T-cell (primary cell): ENCODE measurements at regions of chr20 and their contacts with region 1.

Region 1: GRCh38 chr20:17538517-17539170 is 7.5 kb upstream of the BFSP1 start:
- DNase-seq: peak in 1 of 35 experiments; percentile 5
- ATAC-seq: no peak
- H3K4me3 ChIP-seq: no peak overlapping the region
- H3K4me3 Mint-ChIP-seq: no peak overlapping the region
- H3K27ac ChIP-seq: no peak overlapping the region
- H3K27ac Mint-ChIP-seq: no peak overlapping the region
- H3K4me1 ChIP-seq: peaks cover 0 to 3% of the 10 kb centered on the region in 2 experiments
- H3K4me1 Mint-ChIP-seq: peaks cover 0 to 9% (median 0%) of the 10 kb centered on the region in 3 donors
- H3K27me3 ChIP-seq: peaks cover 0 to 34% of the 10 kb centered on the region in 2 experiments
- H3K27me3 Mint-ChIP-seq: peaks cover 7 to 18% of the 10 kb centered on the region in 2 donors

Region 2: DNA sequence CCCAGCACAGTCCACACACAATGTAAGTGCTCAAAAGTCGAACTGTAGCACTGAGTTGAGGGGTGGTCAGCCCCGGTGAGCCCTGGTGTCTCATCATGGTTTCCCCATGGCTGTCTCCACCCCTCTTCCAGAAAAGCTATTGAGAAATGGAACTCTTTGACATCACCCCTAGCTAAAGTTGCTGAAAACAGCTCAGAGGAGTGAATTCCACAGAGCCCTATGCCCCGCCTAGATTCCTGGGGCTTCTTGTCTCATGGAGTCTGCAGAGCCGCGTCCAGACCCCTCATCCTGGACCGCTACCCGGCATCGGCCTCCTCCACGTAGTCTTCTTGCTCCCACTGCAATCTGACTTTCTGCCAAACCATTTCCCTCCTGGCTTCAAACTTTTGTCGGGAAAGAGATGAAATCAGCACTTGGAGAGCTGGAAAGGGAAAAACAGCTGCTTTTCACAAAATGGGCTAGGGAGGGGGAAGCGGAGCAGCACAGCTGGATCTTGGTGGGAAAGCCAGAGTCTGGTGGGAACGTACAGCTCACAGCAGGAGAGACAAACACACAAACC is 297.7 kb after region 1 on chr20:
- CTCF ChIA-PET with region 1: interaction called in 1 of 2 experiments, 10 read pairs
- POLR2A ChIA-PET with region 1: no interaction called
- DNase-seq: no peak
- ATAC-seq: no peak
- H3K4me3 ChIP-seq: no peak overlapping the region
- H3K4me3 Mint-ChIP-seq: no peak overlapping the region
- H3K27ac ChIP-seq: no peak overlapping the region
- H3K27ac Mint-ChIP-seq: no peak overlapping the region
- H3K4me1 ChIP-seq: no peaks in the 10 kb centered on the region
- H3K4me1 Mint-ChIP-seq: no peaks in the 10 kb centered on the region
- H3K27me3 ChIP-seq: peaks cover 0 to 10% of the 10 kb centered on the region in 2 experiments
- H3K27me3 Mint-ChIP-seq: no peaks in the 10 kb centered on the region

Region 3: DNA sequence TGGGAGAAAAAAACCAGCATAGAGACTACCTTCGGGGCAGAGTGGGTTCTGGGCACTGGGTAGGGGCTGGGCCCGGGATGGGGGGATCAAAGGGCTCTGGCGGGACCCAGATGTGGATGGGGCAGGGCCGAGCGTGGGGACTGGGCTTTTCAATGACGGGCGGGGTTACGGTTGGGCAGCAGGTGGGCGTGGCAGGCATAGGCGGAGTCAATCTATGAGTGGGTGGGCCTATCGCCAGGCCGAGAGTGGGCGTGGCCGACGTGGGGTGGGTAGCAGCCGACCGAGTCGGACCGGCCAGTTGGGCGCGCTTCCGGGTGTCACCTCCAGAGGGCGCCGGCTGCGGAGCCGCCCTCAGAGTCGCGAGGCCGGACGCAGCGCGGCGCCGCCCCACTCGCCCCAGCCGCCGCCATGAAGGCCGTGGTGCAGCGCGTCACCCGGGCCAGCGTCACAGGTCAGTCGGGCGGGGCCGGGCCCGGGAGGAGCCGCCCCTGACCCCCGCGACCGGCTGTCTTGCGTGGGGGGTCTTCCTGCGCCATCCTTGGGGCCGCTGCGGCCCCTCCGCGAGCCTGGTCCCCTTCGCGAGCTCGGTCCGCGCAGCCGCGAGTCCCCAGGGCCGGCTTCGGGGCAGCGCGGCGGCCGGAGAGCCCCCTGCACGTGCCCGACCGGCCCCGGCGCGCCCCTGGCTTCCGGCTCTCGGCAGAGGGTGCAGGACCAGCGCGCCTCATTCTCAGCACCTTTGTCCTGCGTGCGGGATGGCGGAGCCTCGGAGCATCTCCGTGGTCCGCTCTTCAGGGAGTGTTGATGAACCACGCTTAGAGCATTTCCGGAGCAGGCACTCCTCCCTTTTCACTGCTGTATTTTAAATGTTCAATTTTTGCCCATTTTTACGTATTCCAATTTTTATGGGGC is 1049.3 kb after region 1 on chr20 and contains the start of gene DTD1:
- CTCF ChIA-PET with region 1: no interaction called
- POLR2A ChIA-PET with region 1: no interaction called
- DNase-seq: peak; percentile 19 to 83 (median 53)
- ATAC-seq: peak; percentile 79 to 85 (median 80)
- H3K4me3 ChIP-seq: peak within 1 kb of the TSS; percentile 79
- H3K4me3 Mint-ChIP-seq: peak within 1 kb of the TSS; percentile 87 to 88 (median 88)
- H3K27ac ChIP-seq: peak within 1 kb of the TSS; percentile 74
- H3K27ac Mint-ChIP-seq: peak within 1 kb of the TSS; percentile 85 to 91
- H3K4me1 ChIP-seq: peaks cover 7 to 15% of the 10 kb centered on the region in 2 experiments
- H3K4me1 Mint-ChIP-seq: peaks cover 28 to 36% (median 35%) of the 10 kb centered on the region in 3 donors
- H3K27me3 ChIP-seq: no peaks in the 10 kb centered on the region
- H3K27me3 Mint-ChIP-seq: peaks cover 5 to 8% of the 10 kb centered on the region in 2 donors
- total RNA-seq, gene DTD1: 15.5 to 24.9 (median 22.0) TPM